Activated CD4-positive, alpha-beta T cell treated with anti-CD3 and anti-CD28 coated beads, Interleukin-2, amount 10 ng/mL, durations not matched to agents 7 days and 5 days (primary cell): ENCODE measurements at regions of chr11 and their contacts with region 1.

Region 1: GRCh38 chr11:72189461-72190275 is 2.3 kb upstream of the FOLR1 start:
- DNase-seq: no peak
- H3K4me3 Mint-ChIP-seq: no peak overlapping the region
- H3K27ac Mint-ChIP-seq: no peak overlapping the region
- H3K4me1 Mint-ChIP-seq: no peaks in the 10 kb centered on the region
- H3K27me3 Mint-ChIP-seq: no peaks in the 10 kb centered on the region

Region 2: GRCh38 chr11:71977743-71978418 is 211.8 kb before region 1 on chr11:
- CTCF ChIA-PET with region 1: interaction called, 10 read pairs
- POLR2A ChIA-PET with region 1: no interaction called
- DNase-seq: peak; percentile 74
- H3K4me3 Mint-ChIP-seq: no peak overlapping the region
- H3K27ac Mint-ChIP-seq: no peak overlapping the region
- H3K4me1 Mint-ChIP-seq: no peaks in the 10 kb centered on the region
- H3K27me3 Mint-ChIP-seq: no peaks in the 10 kb centered on the region

Region 3: GRCh38 chr11:72160319-72160718 is 29.3 kb before region 1 on chr11:
- CTCF ChIA-PET with region 1: no interaction called
- POLR2A ChIA-PET with region 1: no interaction called
- DNase-seq: no peak
- H3K4me3 Mint-ChIP-seq: no peak overlapping the region
- H3K27ac Mint-ChIP-seq: no peak overlapping the region
- H3K4me1 Mint-ChIP-seq: no peaks in the 10 kb centered on the region
- H3K27me3 Mint-ChIP-seq: peaks cover 27% of the 10 kb centered on the region

Region 4: DNA sequence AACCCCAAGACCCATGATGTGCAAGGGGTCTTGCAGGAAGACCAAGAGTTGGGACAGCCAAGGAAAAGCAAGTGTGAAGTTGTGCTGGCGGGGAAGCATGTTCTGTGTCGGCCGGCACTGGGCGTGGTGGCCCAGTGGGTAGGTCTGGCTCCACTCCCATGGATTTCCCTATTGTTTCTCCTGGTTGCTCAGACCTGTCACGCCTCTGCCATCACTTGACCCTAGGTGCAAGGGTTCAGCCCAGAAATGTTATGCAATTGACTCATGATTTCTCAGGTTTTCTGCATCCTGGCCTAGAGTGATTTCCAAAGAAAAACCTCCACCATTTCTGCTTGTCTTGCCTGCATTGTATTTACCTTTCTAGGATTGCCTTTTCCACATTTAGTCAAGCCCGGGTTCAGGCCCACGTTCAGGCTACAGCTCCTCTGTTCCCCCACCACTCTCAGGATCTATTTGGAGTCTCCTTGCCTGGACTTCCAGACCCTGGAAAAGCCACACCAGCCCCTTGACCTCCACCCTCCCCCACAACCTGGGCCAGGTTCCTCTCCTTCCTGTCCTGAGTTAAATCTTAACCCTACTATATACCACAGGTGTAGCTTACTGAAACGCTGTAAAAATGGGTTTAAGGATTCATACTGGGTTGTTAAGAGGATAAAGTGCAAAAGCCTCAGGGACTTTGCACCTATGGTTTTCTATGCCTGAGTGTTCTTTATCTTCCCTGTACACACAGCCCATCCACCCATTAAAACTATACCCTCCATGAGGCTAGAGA is 15.2 kb before region 1 on chr11:
- CTCF ChIA-PET with region 1: no interaction called
- POLR2A ChIA-PET with region 1: no interaction called
- DNase-seq: no peak
- H3K4me3 Mint-ChIP-seq: no peak overlapping the region
- H3K27ac Mint-ChIP-seq: no peak overlapping the region
- H3K4me1 Mint-ChIP-seq: peaks cover 4% of the 10 kb centered on the region
- H3K27me3 Mint-ChIP-seq: peaks cover 3% of the 10 kb centered on the region

Region 5: GRCh38 chr11:72222907-72223614 is 33.4 kb after region 1 on chr11:
- CTCF ChIA-PET with region 1: no interaction called
- POLR2A ChIA-PET with region 1: no interaction called
- DNase-seq: peak; percentile 96
- H3K4me3 Mint-ChIP-seq: peak overlapping the region; percentile 96
- H3K27ac Mint-ChIP-seq: peak overlapping the region; percentile 94
- H3K4me1 Mint-ChIP-seq: peaks cover 31% of the 10 kb centered on the region
- H3K27me3 Mint-ChIP-seq: peaks cover 6% of the 10 kb centered on the region

Region 6: GRCh38 chr11:72541257-72541974 is 351.7 kb after region 1 on chr11:
- CTCF ChIA-PET with region 1: no interaction called
- POLR2A ChIA-PET with region 1: no interaction called
- DNase-seq: no peak
- H3K4me3 Mint-ChIP-seq: no peak overlapping the region
- H3K27ac Mint-ChIP-seq: no peak overlapping the region
- H3K4me1 Mint-ChIP-seq: no peaks in the 10 kb centered on the region
- H3K27me3 Mint-ChIP-seq: peaks cover 44% of the 10 kb centered on the region